T-cell (primary cell): ENCODE measurements at regions of chr6 and their contacts with region 1.

Region 1: GRCh38 chr6:135909737-135910387 is 58.4 kb downstream of the PDE7B start:
- DNase-seq: peak; percentile 17 to 86 (median 53)
- ATAC-seq: peak; percentile 65 to 92 (median 81)
- H3K4me3 ChIP-seq: peak overlapping the region in 1 of 2 donors; percentile 32
- H3K4me3 Mint-ChIP-seq: no peak overlapping the region
- H3K27ac ChIP-seq: no peak overlapping the region
- H3K27ac Mint-ChIP-seq: no peak overlapping the region
- H3K4me1 ChIP-seq: peaks cover 3% of the 10 kb centered on the region in 2 experiments
- H3K4me1 Mint-ChIP-seq: peaks cover 0 to 4% (median 2%) of the 10 kb centered on the region in 3 donors
- H3K27me3 ChIP-seq: no peaks in the 10 kb centered on the region
- H3K27me3 Mint-ChIP-seq: no peaks in the 10 kb centered on the region

Region 2: DNA sequence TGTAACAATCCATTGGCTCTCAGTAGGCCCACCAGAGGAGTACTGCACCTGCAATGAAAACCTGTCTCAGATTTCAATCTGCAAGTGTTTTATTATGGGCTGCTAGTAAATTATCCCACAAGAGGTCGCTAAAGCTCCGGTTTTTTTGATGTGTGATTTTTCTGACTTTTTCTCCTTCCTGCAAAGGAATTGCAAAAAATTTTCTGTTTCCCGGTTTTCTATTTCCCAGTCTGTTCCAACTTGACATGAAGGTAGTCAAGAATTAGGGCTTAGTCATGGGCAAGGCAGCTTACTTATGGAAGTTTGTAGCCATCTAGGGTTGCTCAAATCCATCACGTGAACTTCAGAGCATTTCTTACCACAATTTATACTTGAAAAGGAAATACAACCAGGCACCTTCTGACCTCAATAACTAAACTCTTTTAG is 373.9 kb before region 1 on chr6:
- CTCF ChIA-PET with region 1: interaction called, 8 to 36 read pairs
- POLR2A ChIA-PET with region 1: no interaction called
- DNase-seq: peak in 6 of 35 experiments; percentile 2 to 61 (median 8)
- ATAC-seq: peak; percentile 62 to 69 (median 64)
- H3K4me3 ChIP-seq: no peak overlapping the region
- H3K4me3 Mint-ChIP-seq: peak overlapping the region in 2 of 3 donors; percentile 46 to 50
- H3K27ac ChIP-seq: no peak overlapping the region
- H3K27ac Mint-ChIP-seq: peak overlapping the region in 1 of 2 donors; percentile 36
- H3K4me1 ChIP-seq: peaks cover 4 to 8% of the 10 kb centered on the region in 2 experiments
- H3K4me1 Mint-ChIP-seq: peaks cover 0 to 18% (median 13%) of the 10 kb centered on the region in 3 donors
- H3K27me3 ChIP-seq: no peaks in the 10 kb centered on the region
- H3K27me3 Mint-ChIP-seq: peaks cover 0 to 3% of the 10 kb centered on the region in 2 donors

Region 3: GRCh38 chr6:135675862-135676261 is 234.0 kb before region 1 on chr6:
- CTCF ChIA-PET with region 1: interaction called, 13 to 30 read pairs
- POLR2A ChIA-PET with region 1: no interaction called
- DNase-seq: peak in 30 of 35 experiments; percentile 4 to 78 (median 26)
- ATAC-seq: peak in 3 of 4 experiments; percentile 77 to 84 (median 78)
- H3K4me3 ChIP-seq: no peak overlapping the region
- H3K4me3 Mint-ChIP-seq: no peak overlapping the region
- H3K27ac ChIP-seq: no peak overlapping the region
- H3K27ac Mint-ChIP-seq: no peak overlapping the region
- H3K4me1 ChIP-seq: no peaks in the 10 kb centered on the region
- H3K4me1 Mint-ChIP-seq: no peaks in the 10 kb centered on the region
- H3K27me3 ChIP-seq: no peaks in the 10 kb centered on the region
- H3K27me3 Mint-ChIP-seq: no peaks in the 10 kb centered on the region

Region 4: GRCh38 chr6:135680964-135681913 is 228.6 kb before region 1 on chr6:
- CTCF ChIA-PET with region 1: interaction called, 13 to 30 read pairs
- POLR2A ChIA-PET with region 1: no interaction called
- DNase-seq: no peak
- ATAC-seq: no peak
- H3K4me3 ChIP-seq: no peak overlapping the region
- H3K4me3 Mint-ChIP-seq: no peak overlapping the region
- H3K27ac ChIP-seq: no peak overlapping the region
- H3K27ac Mint-ChIP-seq: no peak overlapping the region
- H3K4me1 ChIP-seq: no peaks in the 10 kb centered on the region
- H3K4me1 Mint-ChIP-seq: no peaks in the 10 kb centered on the region
- H3K27me3 ChIP-seq: no peaks in the 10 kb centered on the region
- H3K27me3 Mint-ChIP-seq: peaks cover 0 to 4% of the 10 kb centered on the region in 2 donors

Region 5: DNA sequence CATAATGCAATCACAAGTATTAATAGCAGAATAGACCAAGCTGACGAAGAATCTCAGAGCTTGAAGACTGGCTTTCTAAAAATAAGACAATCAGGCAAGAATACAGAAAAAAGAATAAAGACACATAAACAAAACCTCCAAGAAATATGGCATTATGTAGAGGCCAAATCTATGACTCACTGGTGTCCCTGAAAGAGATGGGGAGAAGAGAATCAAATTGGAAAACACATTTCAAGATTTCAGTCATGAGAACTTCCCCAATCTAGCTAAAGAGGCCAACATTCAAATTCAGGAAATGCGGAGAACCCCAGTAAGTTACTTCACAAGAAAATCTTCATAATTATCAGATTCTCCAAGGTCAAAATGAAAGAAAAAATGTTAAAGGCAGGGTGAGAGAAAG is 127.3 kb before region 1 on chr6:
- CTCF ChIA-PET with region 1: no interaction called
- POLR2A ChIA-PET with region 1: no interaction called
- DNase-seq: no peak
- ATAC-seq: no peak
- H3K4me3 ChIP-seq: no peak overlapping the region
- H3K4me3 Mint-ChIP-seq: no peak overlapping the region
- H3K27ac ChIP-seq: no peak overlapping the region
- H3K27ac Mint-ChIP-seq: no peak overlapping the region
- H3K4me1 ChIP-seq: no peaks in the 10 kb centered on the region
- H3K4me1 Mint-ChIP-seq: no peaks in the 10 kb centered on the region
- H3K27me3 ChIP-seq: peaks cover 0 to 5% of the 10 kb centered on the region in 2 experiments
- H3K27me3 Mint-ChIP-seq: peaks cover 0 to 7% of the 10 kb centered on the region in 2 donors

Region 6: DNA sequence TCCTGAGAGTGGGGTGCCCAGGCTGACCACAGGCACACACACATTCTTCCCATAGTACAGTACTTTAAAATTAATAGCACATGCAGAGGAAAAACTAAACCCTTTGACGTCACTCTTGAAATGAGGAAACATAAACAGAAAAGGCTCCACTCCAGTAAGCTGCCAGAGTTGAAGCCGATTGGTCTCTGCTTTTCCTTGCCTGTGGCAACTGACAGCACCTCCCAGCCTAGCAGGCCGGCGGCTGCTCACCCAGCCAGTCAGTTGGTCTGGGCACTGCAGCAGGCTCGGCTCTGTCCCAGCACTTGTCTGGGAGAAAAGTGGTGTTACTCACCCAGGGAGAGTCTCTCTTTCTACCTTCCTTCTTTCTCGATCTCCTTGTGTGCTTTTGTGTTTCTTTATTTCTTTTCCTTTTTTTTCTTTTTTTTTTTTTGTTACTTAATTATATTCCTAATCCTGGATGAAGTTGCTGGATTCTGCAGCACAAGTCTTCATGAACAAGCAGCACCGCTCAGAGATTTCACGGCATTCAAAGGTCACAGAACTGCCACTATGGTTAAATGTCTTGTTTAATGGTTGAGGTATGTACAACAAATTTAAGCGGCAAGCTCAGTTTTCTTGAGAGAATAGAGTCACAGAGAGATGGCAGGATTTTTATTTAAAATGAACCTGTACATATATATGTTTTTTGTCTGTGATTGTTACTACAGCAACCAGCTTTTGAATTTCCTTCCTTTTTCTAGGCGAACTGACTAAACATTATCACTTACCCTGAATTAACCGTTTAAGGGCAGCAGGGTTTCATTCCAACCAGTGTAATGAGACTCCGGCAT is 58.2 kb before region 1 on chr6 and contains the start of gene PDE7B:
- CTCF ChIA-PET with region 1: interaction called, 5 to 10 read pairs
- POLR2A ChIA-PET with region 1: no interaction called
- DNase-seq: peak in 32 of 35 experiments; percentile 5 to 58 (median 24)
- ATAC-seq: peak; percentile 52 to 86 (median 72)
- H3K4me3 ChIP-seq: peak within 1 kb of the TSS; percentile 44 to 62
- H3K4me3 Mint-ChIP-seq: peak within 1 kb of the TSS; percentile 72 to 82 (median 78)
- H3K27ac ChIP-seq: peak within 1 kb of the TSS; percentile 40
- H3K27ac Mint-ChIP-seq: peak within 1 kb of the TSS; percentile 76 to 79
- H3K4me1 ChIP-seq: peaks cover 7 to 23% of the 10 kb centered on the region in 2 experiments
- H3K4me1 Mint-ChIP-seq: peaks cover 22 to 27% (median 27%) of the 10 kb centered on the region in 3 donors
- H3K27me3 ChIP-seq: peaks cover 0 to 3% of the 10 kb centered on the region in 2 experiments
- H3K27me3 Mint-ChIP-seq: peaks cover 0 to 2% of the 10 kb centered on the region in 2 donors
- total RNA-seq, gene PDE7B: 0.35 to 1.5 (median 0.69) TPM

Region 7: GRCh38 chr6:135962731-135963130 is 52.9 kb after region 1 on chr6:
- CTCF ChIA-PET with region 1: no interaction called
- POLR2A ChIA-PET with region 1: no interaction called
- DNase-seq: no peak
- ATAC-seq: no peak
- H3K4me3 ChIP-seq: no peak overlapping the region
- H3K4me3 Mint-ChIP-seq: no peak overlapping the region
- H3K27ac ChIP-seq: no peak overlapping the region
- H3K27ac Mint-ChIP-seq: no peak overlapping the region
- H3K4me1 ChIP-seq: no peaks in the 10 kb centered on the region
- H3K4me1 Mint-ChIP-seq: no peaks in the 10 kb centered on the region
- H3K27me3 ChIP-seq: no peaks in the 10 kb centered on the region
- H3K27me3 Mint-ChIP-seq: no peaks in the 10 kb centered on the region

Region 8: GRCh38 chr6:136050475-136050874 is 140.6 kb after region 1 on chr6:
- CTCF ChIA-PET with region 1: no interaction called
- POLR2A ChIA-PET with region 1: no interaction called
- DNase-seq: no peak
- ATAC-seq: no peak
- H3K4me3 ChIP-seq: no peak overlapping the region
- H3K4me3 Mint-ChIP-seq: peak overlapping the region in 1 of 3 donors; percentile 58
- H3K27ac ChIP-seq: no peak overlapping the region
- H3K27ac Mint-ChIP-seq: peak overlapping the region in 1 of 2 donors; percentile 45
- H3K4me1 ChIP-seq: peaks cover 4 to 9% of the 10 kb centered on the region in 2 experiments
- H3K4me1 Mint-ChIP-seq: peaks cover 17 to 27% (median 20%) of the 10 kb centered on the region in 3 donors
- H3K27me3 ChIP-seq: no peaks in the 10 kb centered on the region
- H3K27me3 Mint-ChIP-seq: no peaks in the 10 kb centered on the region